Activated CD4-positive, alpha-beta T cell treated with anti-CD3 and anti-CD28 coated beads, Interleukin-2, amount 10 ng/mL, durations not matched to agents 24 days and 14 days (primary cell): ENCODE measurements at regions of chrX and their contacts with region 1.

Region 1: GRCh38 chrX:115649461-115650063 is 88.6 kb downstream of the PLS3 start:
- DNase-seq: no peak
- H3K4me3 Mint-ChIP-seq: no peak overlapping the region
- H3K27ac Mint-ChIP-seq: no peak overlapping the region
- H3K4me1 Mint-ChIP-seq: no peaks in the 10 kb centered on the region
- H3K27me3 Mint-ChIP-seq: no peaks in the 10 kb centered on the region

Region 2: GRCh38 chrX:115690511-115691216 is 41.1 kb after region 1 on chrX:
- intact Hi-C with region 1: loop called (anchors 5 kb)
- DNase-seq: peak; percentile 74
- H3K4me3 Mint-ChIP-seq: no peak overlapping the region
- H3K27ac Mint-ChIP-seq: no peak overlapping the region
- H3K4me1 Mint-ChIP-seq: no peaks in the 10 kb centered on the region
- H3K27me3 Mint-ChIP-seq: no peaks in the 10 kb centered on the region